ENCODE measurements at regions of chr20 and their contacts with region 1.

Region 1: DNA sequence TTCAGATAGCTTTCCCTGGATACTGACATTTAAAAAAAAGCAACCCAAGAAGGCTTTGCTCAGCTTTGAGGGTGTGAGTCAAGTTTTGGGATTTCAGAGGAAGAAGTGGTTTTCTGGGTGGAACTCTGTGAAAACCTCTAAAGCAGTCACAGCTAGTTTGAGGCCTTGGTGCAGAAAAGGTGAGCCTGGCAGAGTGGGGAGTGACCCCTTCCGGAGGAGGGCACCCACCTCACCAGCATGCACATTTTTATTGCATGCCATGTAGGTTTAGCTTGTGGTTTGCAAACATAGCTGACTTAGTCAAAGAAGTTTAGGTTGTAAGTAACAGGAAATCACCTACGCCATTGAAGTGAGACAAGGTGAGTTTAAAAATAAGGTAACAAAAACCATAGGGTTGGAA is 146.8 kb upstream of the PMEPA1 start:
- DNase-seq: no peak
- H3K4me3 ChIP-seq: no peak overlapping the region
- H3K27ac ChIP-seq: no peak overlapping the region
- H3K4me1 ChIP-seq: no peaks in the 10 kb centered on the region
- H3K27me3 ChIP-seq: no peaks in the 10 kb centered on the region

Region 2: GRCh38 chr20:57844626-57845596 is 11.7 kb before region 1 on chr20:
- CTCF ChIA-PET with region 1: interaction called, 10 read pairs
- POLR2A ChIA-PET with region 1: no interaction called
- DNase-seq: no peak
- H3K4me3 ChIP-seq: no peak overlapping the region
- H3K27ac ChIP-seq: no peak overlapping the region
- H3K4me1 ChIP-seq: no peaks in the 10 kb centered on the region
- H3K27me3 ChIP-seq: no peaks in the 10 kb centered on the region

Region 3: GRCh38 chr20:57879779-57880570 is 23.3 kb after region 1 on chr20:
- CTCF ChIA-PET with region 1: no interaction called
- POLR2A ChIA-PET with region 1: no interaction called
- DNase-seq: no peak
- H3K4me3 ChIP-seq: no peak overlapping the region
- H3K27ac ChIP-seq: no peak overlapping the region
- H3K4me1 ChIP-seq: no peaks in the 10 kb centered on the region
- H3K27me3 ChIP-seq: no peaks in the 10 kb centered on the region